Mammary epithelial cell (primary cell): ENCODE measurements at regions of chr13 and their contacts with region 1.

Region 1: DNA sequence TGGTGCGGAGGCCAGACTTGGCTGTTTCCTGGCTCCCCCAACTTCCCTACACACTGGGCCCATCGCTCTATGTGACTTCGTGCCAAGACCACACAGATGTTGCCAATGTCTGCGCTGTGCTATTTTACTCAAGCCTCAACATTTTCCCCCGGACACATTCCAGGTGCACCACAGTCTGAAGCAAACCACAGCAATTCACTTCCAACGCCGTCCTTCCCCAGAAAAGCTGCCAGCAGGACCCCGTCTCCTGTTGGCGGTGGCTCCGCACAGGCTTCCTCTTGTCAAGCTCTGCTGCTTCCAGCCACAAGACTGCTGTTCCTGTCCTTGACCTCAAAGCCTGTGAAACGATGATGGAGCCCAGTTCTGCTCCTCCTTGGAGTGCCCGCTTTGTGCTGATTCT is 100.7 kb downstream of the CRYL1 start:
- DNase-seq: no peak
- H3K4me3 ChIP-seq: no peak overlapping the region
- H3K27ac ChIP-seq: no peak overlapping the region
- H3K4me1 ChIP-seq: peaks cover 44% of the 10 kb centered on the region
- H3K27me3 ChIP-seq: no peaks in the 10 kb centered on the region
- CTCF ChIP-seq: no peak

Region 2: GRCh38 chr13:20270163-20270865 is 154.6 kb before region 1 on chr13:
- CTCF ChIA-PET with region 1: no interaction called
- dilution Hi-C with region 1: no loop called
- in situ Hi-C with region 1: no loop called
- intact Hi-C with region 1: loop called (anchors 2 kb)
- DNase-seq: peak; percentile 64
- H3K4me3 ChIP-seq: no peak overlapping the region
- H3K27ac ChIP-seq: peak overlapping the region; percentile 47
- H3K4me1 ChIP-seq: peaks cover 36% of the 10 kb centered on the region
- H3K27me3 ChIP-seq: no peaks in the 10 kb centered on the region
- CTCF ChIP-seq: no peak

Region 3: GRCh38 chr13:20369886-20370361 is 55.0 kb before region 1 on chr13:
- CTCF ChIA-PET with region 1: no interaction called
- dilution Hi-C with region 1: loop called (anchors 5 kb)
- in situ Hi-C with region 1: no loop called
- intact Hi-C with region 1: no loop called
- DNase-seq: no peak
- H3K4me3 ChIP-seq: no peak overlapping the region
- H3K27ac ChIP-seq: peak overlapping the region; percentile 57
- H3K4me1 ChIP-seq: peaks cover 18% of the 10 kb centered on the region
- H3K27me3 ChIP-seq: no peaks in the 10 kb centered on the region
- CTCF ChIP-seq: no peak